ENCODE measurements at regions of chr7 and their contacts with region 1.

Region 1: GRCh38 chr7:93902777-93903423 is 3.5 kb upstream of the GNGT1 start:
- DNase-seq: peak; percentile 9
- H3K4me3 Mint-ChIP-seq: no peak overlapping the region
- H3K27ac Mint-ChIP-seq: no peak overlapping the region
- H3K4me1 Mint-ChIP-seq: no peaks in the 10 kb centered on the region
- H3K27me3 Mint-ChIP-seq: peaks cover 27% of the 10 kb centered on the region

Region 2: DNA sequence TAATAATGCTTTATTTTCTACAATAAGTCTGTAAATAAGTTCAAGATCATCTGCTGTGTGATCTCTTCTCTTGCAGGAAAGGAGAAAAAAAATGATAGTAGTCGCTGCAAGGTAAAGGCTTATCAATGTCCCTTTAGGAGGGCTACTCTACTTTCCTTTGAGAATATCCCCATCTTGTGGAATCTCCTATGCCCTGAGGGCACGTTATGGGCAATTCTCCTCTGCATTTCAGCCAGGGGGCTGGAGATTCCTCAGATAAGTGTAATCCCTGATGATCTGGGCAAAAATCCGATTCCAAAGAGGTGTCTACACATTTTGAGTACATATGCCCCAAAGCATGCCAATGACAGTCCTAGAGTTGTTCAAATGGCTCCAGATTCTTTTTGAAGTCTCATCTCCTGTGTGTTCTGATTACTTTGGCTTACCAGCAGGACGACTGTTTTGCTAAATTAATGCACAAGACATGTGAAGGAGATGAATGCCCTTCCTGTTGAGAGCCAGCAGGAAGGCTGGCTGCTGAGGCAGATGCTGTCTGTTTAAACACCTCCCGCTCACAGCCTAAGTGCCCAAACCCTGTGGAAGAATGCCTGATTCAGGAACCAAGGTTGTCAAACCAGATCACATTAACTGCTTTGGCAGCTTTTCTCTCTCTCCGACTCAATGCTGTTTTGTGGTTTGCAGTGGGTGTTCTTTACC is 320.6 kb after region 1 on chr7:
- CTCF ChIA-PET with region 1: no interaction called
- intact Hi-C with region 1: loop called (anchors 2 kb)
- DNase-seq: no peak
- H3K4me3 Mint-ChIP-seq: no peak overlapping the region
- H3K27ac Mint-ChIP-seq: no peak overlapping the region
- H3K4me1 Mint-ChIP-seq: no peaks in the 10 kb centered on the region
- H3K27me3 Mint-ChIP-seq: no peaks in the 10 kb centered on the region

Region 3: DNA sequence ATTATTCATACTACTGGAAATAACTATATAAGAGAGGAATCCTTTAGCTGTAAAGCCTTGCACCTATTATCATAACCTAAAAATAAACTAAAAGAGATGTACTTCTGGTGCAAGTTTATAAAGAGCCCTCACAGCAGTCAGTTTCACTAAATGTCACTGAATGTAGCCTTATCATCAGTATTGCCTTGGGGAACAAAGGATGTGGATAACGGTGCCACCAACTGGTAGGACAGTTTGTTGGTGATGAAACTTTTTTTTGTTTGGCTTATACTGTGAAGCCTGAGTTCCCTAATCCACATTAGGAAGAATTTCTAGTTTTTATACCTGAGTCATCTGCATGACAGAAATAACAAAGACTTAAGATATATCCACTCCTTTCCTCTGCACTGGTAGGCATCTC is 373.9 kb after region 1 on chr7:
- CTCF ChIA-PET with region 1: no interaction called
- intact Hi-C with region 1: loop called (anchors 10 kb)
- DNase-seq: peak; percentile 5
- H3K4me3 Mint-ChIP-seq: no peak overlapping the region
- H3K27ac Mint-ChIP-seq: no peak overlapping the region
- H3K4me1 Mint-ChIP-seq: no peaks in the 10 kb centered on the region
- H3K27me3 Mint-ChIP-seq: peaks cover 9% of the 10 kb centered on the region

Region 4: DNA sequence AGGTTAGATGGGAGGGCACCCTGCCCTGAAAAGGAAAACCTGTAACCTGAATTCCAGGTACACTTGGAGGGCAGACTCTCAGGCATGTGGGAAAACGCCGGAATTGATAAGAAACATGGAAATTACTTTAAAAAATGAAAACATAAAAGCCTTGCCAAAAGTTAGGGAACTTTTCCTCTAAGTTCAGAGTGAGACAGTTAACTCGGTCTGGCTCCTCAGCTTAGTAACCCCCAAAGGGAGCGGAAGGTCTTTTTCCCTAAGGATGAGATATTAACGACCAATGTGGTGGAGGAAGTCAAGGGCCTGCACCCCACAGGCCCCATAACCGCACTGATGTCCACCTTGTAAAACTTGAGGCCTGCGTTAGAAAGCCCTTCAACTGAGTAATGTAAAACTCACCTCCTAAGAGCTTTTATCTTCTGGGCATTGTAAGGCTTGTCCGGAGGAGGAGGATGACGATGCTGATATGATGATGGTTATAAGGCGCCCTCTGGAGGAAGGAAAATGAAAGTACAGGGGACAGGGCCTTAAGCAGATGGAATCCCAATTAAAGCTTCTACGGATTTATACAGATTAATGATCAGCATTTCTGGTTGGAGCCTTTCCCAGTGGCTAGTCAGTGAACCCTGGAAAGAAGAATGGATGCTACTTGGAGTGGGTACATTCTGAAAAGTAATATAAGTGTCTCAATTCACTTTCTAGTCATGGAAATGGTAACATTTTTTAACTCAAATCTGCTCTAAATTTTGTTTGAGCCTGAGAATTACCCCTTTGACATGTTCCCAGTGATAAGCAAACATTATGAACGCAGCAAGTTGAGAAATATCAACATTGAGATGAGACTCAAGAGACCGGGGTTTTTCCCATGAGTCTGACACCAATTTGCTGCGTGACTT is 492.5 kb after region 1 on chr7:
- CTCF ChIA-PET with region 1: interaction called, 4 read pairs
- intact Hi-C with region 1: loop called (anchors 1 kb)
- DNase-seq: peak; percentile 46
- H3K4me3 Mint-ChIP-seq: no peak overlapping the region
- H3K27ac Mint-ChIP-seq: no peak overlapping the region
- H3K4me1 Mint-ChIP-seq: peaks cover 7% of the 10 kb centered on the region
- H3K27me3 Mint-ChIP-seq: peaks cover 35% of the 10 kb centered on the region

Region 5: DNA sequence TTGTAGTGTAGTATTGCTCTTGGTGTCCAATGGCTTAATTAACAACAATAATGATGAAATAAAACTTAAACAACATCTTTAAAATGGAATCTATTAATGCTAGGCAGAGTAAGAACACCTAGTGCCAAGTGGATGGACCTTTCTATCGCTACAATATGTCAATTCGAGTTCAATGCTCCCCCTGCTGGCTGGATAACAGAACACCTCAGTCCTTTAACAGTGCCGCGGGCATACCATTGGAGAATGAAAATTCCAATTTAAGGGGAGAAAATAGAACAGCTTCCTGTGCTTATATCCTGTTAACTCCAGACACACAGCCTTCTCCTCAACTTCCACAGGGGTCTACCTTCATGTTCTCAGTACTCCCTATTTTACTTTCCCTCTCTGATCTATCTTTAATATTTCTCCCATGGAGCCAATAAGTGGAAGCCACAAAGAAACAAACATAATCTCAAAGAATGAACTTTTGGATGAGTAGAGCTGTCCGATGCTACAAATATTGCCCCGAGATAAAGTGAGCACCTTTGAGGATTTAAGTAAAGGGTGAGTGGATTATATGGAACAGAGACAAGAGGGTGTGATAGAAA is 533.2 kb after region 1 on chr7:
- CTCF ChIA-PET with region 1: no interaction called
- intact Hi-C with region 1: loop called (anchors 5 kb)
- DNase-seq: peak; percentile 68
- H3K4me3 Mint-ChIP-seq: no peak overlapping the region
- H3K27ac Mint-ChIP-seq: no peak overlapping the region
- H3K4me1 Mint-ChIP-seq: no peaks in the 10 kb centered on the region
- H3K27me3 Mint-ChIP-seq: peaks cover 20% of the 10 kb centered on the region

Measured in activated naive CD4-positive, alpha-beta T cell treated with anti-CD3 and anti-CD28 coated beads for 36 hours (primary cell).